GM12878 (cell line): ENCODE measurements at regions of chr1 and their contacts with region 1.

Region 1: GRCh38 chr1:225977937-225978748 is 21.0 kb downstream of the SDE2 start:
- DNase-seq: peak; percentile 45
- ATAC-seq: peak; percentile 85
- H3K4me3 ChIP-seq: no peak overlapping the region
- H3K27ac ChIP-seq: no peak overlapping the region
- H3K4me1 ChIP-seq: 0 out of 2 replicates have a peak, but pooled peaks cover 5% of the 10 kb centered on the region
- H3K27me3 ChIP-seq: no peaks in the 10 kb centered on the region
- CTCF ChIP-seq: peak; percentile 9 to 54 (median 11); a peak in 4 of 6 replicates
- EP300 ChIP-seq: no peak
- POLR2A ChIP-seq: no peak
- RAD21 ChIP-seq: peak; percentile 51

Region 2: GRCh38 chr1:225772323-225772768 is 205.8 kb before region 1 on chr1:
- CTCF ChIA-PET with region 1: interaction called, 4 read pairs
- POLR2A ChIA-PET with region 1: no interaction called
- RAD21 ChIA-PET with region 1: no interaction called
- SMC1A ChIA-PET with region 1: interaction called, 3 read pairs
- in situ Hi-C with region 1: no loop called
- intact Hi-C with region 1: loop called (anchors 2 kb)
- DNase-seq: no peak
- ATAC-seq: peak; percentile 89
- H3K4me3 ChIP-seq: no peak overlapping the region
- H3K27ac ChIP-seq: no peak overlapping the region
- H3K4me1 ChIP-seq: no peaks in the 10 kb centered on the region
- H3K27me3 ChIP-seq: no peaks in the 10 kb centered on the region
- CTCF ChIP-seq: peak; percentile 57 to 63 (median 62); a peak in 5 of 6 replicates
- EP300 ChIP-seq: no peak
- POLR2A ChIP-seq: no peak
- RAD21 ChIP-seq: peak; percentile 62

Region 3: DNA sequence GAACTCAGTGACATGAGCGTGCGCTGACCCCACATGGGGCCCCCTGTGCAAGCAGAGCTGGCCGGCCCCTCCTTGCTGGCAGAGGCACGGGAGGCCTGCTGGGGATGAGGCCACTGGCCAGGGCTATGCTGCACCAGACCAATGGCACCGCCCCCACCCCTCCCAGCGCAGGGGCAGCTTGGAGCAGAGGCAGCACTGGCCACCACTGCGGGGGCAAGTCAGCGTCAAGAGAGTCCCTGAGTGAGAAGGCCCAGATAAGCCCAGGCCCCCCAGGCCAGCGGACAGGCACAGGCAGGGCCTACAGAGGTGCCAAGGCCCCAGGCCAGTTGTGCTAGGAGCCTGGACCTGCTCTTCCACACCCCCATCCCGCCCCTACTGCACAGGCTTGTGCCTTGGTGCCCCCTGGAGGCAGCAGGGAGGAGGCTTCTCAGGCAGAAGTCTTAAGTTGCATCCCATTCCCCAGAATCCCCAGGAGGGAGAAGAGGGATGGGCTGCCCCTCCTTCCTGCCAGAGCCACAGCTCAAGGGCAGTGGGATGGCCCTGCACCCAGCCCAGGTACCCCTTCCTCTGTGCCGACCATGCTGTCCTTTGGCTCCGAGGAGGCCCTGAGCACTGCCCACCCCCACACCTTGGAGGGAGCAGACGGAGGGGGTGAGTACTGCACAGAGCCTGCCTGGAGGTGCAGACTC is 132.4 kb before region 1 on chr1:
- CTCF ChIA-PET with region 1: no interaction called
- POLR2A ChIA-PET with region 1: no interaction called
- RAD21 ChIA-PET with region 1: no interaction called
- SMC1A ChIA-PET with region 1: no interaction called
- in situ Hi-C with region 1: no loop called
- intact Hi-C with region 1: no loop called
- DNase-seq: no peak
- ATAC-seq: peak; percentile 36
- H3K4me3 ChIP-seq: no peak overlapping the region
- H3K27ac ChIP-seq: no peak overlapping the region
- H3K4me1 ChIP-seq: peaks cover 34% of the 10 kb centered on the region
- H3K27me3 ChIP-seq: no peaks in the 10 kb centered on the region
- CTCF ChIP-seq: peak; percentile 43 to 59 (median 47)
- EP300 ChIP-seq: no peak
- POLR2A ChIP-seq: peak; percentile 27
- RAD21 ChIP-seq: peak; percentile 68

Region 4: DNA sequence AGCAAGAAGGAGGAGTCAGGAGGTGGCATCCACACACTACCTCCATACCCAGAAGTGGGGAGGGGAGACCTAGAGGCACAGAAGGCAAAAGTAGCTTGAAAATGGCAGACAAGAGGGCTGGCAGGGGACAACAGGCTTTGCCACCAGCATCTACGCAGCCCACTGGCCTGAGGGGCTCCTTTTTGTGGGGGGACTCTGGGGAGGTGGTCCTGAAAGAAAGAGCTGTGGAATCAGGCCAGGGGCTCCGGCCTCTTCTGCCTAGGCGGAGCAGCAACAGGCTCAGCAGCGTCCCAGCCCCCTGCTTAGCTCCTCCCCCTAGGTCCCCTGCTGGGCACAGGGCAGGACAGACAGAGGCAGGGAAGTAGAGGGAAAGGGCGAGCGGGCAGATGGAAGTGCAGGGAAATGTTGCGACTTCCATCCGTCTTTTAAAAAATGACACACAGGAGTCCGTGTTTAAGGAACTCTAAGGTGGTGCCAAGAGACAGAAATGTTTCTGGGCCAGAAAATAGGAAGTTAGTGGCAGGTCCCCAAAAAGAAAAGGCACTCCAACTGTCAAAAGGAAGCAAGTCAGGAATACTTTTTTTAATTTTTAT is 27.1 kb before region 1 on chr1:
- CTCF ChIA-PET with region 1: no interaction called
- POLR2A ChIA-PET with region 1: no interaction called
- RAD21 ChIA-PET with region 1: no interaction called
- SMC1A ChIA-PET with region 1: no interaction called
- in situ Hi-C with region 1: no loop called
- intact Hi-C with region 1: no loop called
- DNase-seq: no peak
- ATAC-seq: no peak
- H3K4me3 ChIP-seq: no peak overlapping the region
- H3K27ac ChIP-seq: no peak overlapping the region
- H3K4me1 ChIP-seq: no peaks in the 10 kb centered on the region
- H3K27me3 ChIP-seq: peaks cover 0 to 2% of the 10 kb centered on the region in 2 experiments; a peak in 2 of 4 replicates
- CTCF ChIP-seq: no peak
- EP300 ChIP-seq: no peak
- POLR2A ChIP-seq: no peak
- RAD21 ChIP-seq: no peak

Region 5: GRCh38 chr1:225962440-225962975 is 15.6 kb before region 1 on chr1:
- CTCF ChIA-PET with region 1: interaction called, 55 read pairs
- POLR2A ChIA-PET with region 1: interaction called, 7 read pairs
- RAD21 ChIA-PET with region 1: no interaction called
- SMC1A ChIA-PET with region 1: interaction called, 5 read pairs
- in situ Hi-C with region 1: no loop called
- intact Hi-C with region 1: no loop called
- DNase-seq: no peak
- ATAC-seq: peak; percentile 99
- H3K4me3 ChIP-seq: no peak overlapping the region
- H3K27ac ChIP-seq: no peak overlapping the region
- H3K4me1 ChIP-seq: no peaks in the 10 kb centered on the region
- H3K27me3 ChIP-seq: no peaks in the 10 kb centered on the region; a peak in 1 of 4 replicates
- CTCF ChIP-seq: peak; percentile 67 to 85 (median 75)
- EP300 ChIP-seq: no peak
- POLR2A ChIP-seq: no peak
- RAD21 ChIP-seq: peak; percentile 60

Region 6: DNA sequence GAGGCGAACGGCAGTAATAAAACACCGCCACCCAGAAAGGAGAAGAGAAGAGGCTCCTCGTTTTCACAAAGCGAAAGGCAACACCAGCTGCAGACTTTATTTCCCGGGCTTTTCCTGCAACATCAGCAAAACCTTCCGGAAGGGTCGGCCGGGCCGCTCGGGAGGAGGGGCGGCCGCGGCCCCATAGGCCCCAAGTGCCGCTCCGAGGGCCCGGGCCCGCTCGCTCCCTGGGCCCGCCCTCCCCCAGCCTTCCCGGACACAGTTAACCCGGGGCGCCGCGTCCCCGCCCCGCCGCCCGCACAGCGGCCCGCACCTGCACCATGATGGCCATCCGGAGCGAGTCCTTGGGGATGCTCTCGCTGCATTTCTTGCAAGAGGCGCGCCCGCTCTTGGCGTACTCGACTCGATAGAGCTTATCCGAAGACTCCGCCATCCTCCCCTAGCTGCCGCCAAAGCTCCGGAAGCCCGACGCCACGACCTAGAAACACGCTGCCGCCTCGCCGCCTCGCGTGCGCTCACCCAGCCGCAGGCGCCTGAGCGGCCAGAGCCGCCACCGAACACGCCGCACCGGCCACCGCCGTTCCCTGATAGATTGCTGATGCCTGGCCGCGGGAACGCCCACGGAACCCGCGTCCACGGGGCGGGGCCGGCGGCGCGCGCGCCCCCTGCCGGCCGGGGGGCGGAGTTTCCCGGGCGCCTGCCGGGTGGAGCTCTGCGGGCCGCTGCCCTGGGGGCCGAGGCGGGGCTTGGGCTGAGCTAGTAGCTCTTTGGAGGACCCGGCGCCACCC is 429.5 kb after region 1 on chr1 and contains the start of gene PARP1:
- CTCF ChIA-PET with region 1: no interaction called
- POLR2A ChIA-PET with region 1: no interaction called
- RAD21 ChIA-PET with region 1: no interaction called
- SMC1A ChIA-PET with region 1: no interaction called
- in situ Hi-C with region 1: no loop called
- intact Hi-C with region 1: no loop called
- DNase-seq: no peak
- ATAC-seq: peak; percentile 85
- H3K4me3 ChIP-seq: peak within 1 kb of the TSS; percentile 86
- H3K27ac ChIP-seq: peak within 1 kb of the TSS; percentile 77
- H3K4me1 ChIP-seq: peaks cover 22% of the 10 kb centered on the region
- H3K27me3 ChIP-seq: no peaks in the 10 kb centered on the region
- CTCF ChIP-seq: peak; percentile 33 to 83 (median 71); a peak in 5 of 6 replicates
- EP300 ChIP-seq: no peak; a peak in 1 of 4 replicates
- POLR2A ChIP-seq: peak; percentile 86
- RAD21 ChIP-seq: no peak
- polyA plus RNA-seq, gene PARP1: 113 to 170 TPM